ENCODE measurements at regions of chr11 and their contacts with region 1.

Region 1: GRCh38 chr11:115930886-115931547 is 426.8 kb upstream of the CADM1 start:
- DNase-seq: peak; percentile 22
- H3K4me3 ChIP-seq: no peak overlapping the region
- H3K27ac ChIP-seq: peak overlapping the region in 1 of 4 donors; percentile 41
- H3K4me1 ChIP-seq: peaks cover 0 to 13% (median 1%) of the 10 kb centered on the region in 4 donors
- H3K27me3 ChIP-seq: no peaks in the 10 kb centered on the region
- CTCF ChIP-seq: no peak
- EP300 ChIP-seq: no peak
- POLR2A ChIP-seq: no peak

Region 2: GRCh38 chr11:115446214-115446613 is 484.8 kb before region 1 on chr11:
- in situ Hi-C with region 1: no loop called
- intact Hi-C with region 1: loop called (anchors 5 kb)
- DNase-seq: no peak
- H3K4me3 ChIP-seq: no peak overlapping the region
- H3K27ac ChIP-seq: no peak overlapping the region
- H3K4me1 ChIP-seq: no peaks in the 10 kb centered on the region
- H3K27me3 ChIP-seq: no peaks in the 10 kb centered on the region
- CTCF ChIP-seq: no peak
- EP300 ChIP-seq: no peak
- POLR2A ChIP-seq: no peak

Region 3: DNA sequence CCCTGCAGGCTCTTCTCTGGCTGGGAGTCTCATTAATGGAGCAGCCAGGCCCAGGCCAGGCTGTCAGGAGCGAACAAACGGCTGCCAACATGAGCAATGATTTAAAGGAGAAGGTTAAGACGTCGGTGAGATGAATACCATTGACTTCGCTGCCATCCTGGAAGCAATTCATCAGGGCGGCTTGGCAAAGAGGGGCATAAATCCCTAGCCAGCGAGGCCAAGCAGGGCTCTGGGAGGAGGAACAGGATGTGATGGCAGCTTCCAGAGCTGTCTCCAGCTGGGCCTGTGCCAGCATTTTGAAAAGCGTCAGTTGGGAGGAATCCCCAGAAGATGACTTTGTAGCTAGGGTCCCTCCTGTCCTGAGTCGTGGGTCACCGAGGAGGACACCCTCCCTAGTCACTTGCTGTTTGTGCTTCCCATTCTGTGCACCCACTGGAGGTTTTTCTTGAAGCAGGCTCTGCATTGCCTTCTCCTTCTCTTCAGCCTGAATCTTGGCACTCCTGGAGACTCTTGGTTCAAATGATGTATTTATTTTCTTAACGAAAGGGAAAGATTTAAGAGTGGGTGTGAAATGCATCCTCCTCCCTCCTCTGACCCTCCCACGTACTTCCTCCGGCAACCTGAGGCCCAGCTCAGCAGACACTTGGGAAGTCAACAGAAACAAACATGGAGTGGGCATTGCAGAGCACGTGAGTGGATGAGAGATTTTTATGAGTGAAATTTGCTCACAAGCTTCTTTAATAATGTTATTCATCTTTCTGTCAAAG is 49.5 kb after region 1 on chr11:
- in situ Hi-C with region 1: no loop called
- intact Hi-C with region 1: no loop called
- DNase-seq: no peak
- H3K4me3 ChIP-seq: no peak overlapping the region
- H3K27ac ChIP-seq: no peak overlapping the region
- H3K4me1 ChIP-seq: peaks cover 0 to 8% (median 0%) of the 10 kb centered on the region in 4 donors
- H3K27me3 ChIP-seq: peaks cover 8% of the 10 kb centered on the region
- CTCF ChIP-seq: no peak
- EP300 ChIP-seq: no peak
- POLR2A ChIP-seq: no peak